ENCODE measurements at regions of chr1 and their contacts with region 1.

Region 1: DNA sequence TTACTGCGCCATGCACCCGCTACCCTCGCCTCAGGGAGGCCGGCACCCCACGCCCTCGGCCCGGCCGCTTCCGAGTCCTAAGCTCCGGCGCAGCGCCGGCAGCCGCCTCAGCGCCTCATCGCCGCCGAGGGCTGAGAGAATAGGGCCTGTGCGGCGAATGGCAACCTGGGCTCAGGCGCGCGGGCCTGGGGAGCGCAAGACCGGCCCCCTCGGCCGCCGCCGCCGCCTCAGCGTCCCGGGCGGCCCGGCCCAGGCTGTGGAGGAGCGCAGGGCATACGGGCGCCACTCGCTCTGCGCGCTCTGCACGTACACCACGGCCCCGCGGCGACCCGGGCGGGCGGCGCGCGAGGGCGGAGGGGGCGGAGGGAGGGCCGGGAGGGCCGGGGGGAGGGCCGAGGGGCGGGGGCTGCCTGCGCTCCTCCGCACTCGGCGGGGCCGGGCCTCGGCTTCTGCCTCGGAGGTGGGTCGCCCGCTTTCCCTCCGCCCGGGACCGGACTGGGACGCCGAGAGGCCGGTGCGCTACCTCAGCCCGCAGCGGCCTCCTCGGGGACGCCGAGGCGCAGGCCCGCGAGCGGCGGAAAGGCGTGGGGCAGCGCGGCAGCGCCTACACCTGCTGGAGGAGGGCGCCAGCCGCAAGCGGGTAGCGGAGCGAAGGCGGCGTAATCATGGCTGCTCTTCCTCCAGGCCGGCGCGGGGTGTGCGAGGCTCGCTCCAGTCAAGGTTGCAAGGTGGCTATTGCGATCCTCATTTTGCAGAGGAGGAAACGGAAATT is at the start of gene EGLN1:
- DNase-seq: peak; percentile 89
- ATAC-seq: peak; percentile 86
- H3K4me3 Mint-ChIP-seq: peak within 1 kb of the TSS; percentile 93
- H3K27ac Mint-ChIP-seq: peak within 1 kb of the TSS; percentile 90
- H3K4me1 Mint-ChIP-seq: peaks cover 31% of the 10 kb centered on the region
- H3K27me3 Mint-ChIP-seq: peaks cover 10% of the 10 kb centered on the region
- total RNA-seq, gene EGLN1: 34.9 to 39.8 TPM

Region 2: GRCh38 chr1:231337472-231338269 is 84.5 kb before region 1 on chr1 and contains the start of gene EXOC8:
- POLR2A ChIA-PET with region 1: interaction called, 11 read pairs
- DNase-seq: peak; percentile 99
- ATAC-seq: peak; percentile 79
- H3K4me3 Mint-ChIP-seq: peak within 1 kb of the TSS; percentile 98
- H3K27ac Mint-ChIP-seq: peak within 1 kb of the TSS; percentile 99
- H3K4me1 Mint-ChIP-seq: peaks cover 47% of the 10 kb centered on the region
- H3K27me3 Mint-ChIP-seq: no peaks in the 10 kb centered on the region
- total RNA-seq, gene EXOC8: 24.0 to 24.3 TPM

Region 3: DNA sequence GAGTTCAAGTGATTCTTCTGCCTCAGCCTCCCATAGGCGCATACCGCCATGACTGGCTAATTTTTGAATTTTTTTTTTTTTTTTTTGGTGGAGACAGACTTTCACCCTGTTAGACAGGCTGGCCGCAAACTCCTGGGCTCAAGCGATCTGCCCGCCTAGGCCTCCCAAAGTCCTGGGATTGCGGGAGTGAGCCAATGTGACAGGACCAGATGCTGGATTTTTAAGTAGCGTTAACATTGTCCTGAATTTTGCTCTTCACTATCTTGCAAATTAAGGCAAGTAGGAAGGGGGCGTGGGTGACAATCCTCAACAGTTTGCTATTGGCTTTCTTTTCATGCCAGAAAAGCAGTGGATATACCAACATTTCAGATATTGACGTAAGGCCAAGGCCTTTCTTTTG is 56.6 kb after region 1 on chr1:
- POLR2A ChIA-PET with region 1: no interaction called
- DNase-seq: no peak
- ATAC-seq: no peak
- H3K4me3 Mint-ChIP-seq: no peak overlapping the region
- H3K27ac Mint-ChIP-seq: no peak overlapping the region
- H3K4me1 Mint-ChIP-seq: no peaks in the 10 kb centered on the region
- H3K27me3 Mint-ChIP-seq: peaks cover 36% of the 10 kb centered on the region